Activated naive CD4-positive, alpha-beta T cell treated with anti-CD3 and anti-CD28 coated beads for 36 hours (primary cell): ENCODE measurements at regions of chr17 and their contacts with region 1.

Region 1: GRCh38 chr17:55458977-55459376 is 37.3 kb upstream of the MMD start:
- DNase-seq: peak; percentile 80
- H3K4me3 Mint-ChIP-seq: no peak overlapping the region
- H3K27ac Mint-ChIP-seq: no peak overlapping the region
- H3K4me1 Mint-ChIP-seq: peaks cover 19% of the 10 kb centered on the region
- H3K27me3 Mint-ChIP-seq: no peaks in the 10 kb centered on the region

Region 2: GRCh38 chr17:55437159-55437605 is 21.8 kb before region 1 on chr17:
- CTCF ChIA-PET with region 1: interaction called, 3 read pairs
- intact Hi-C with region 1: loop called (anchors 1 kb)
- DNase-seq: no peak
- H3K4me3 Mint-ChIP-seq: no peak overlapping the region
- H3K27ac Mint-ChIP-seq: no peak overlapping the region
- H3K4me1 Mint-ChIP-seq: peaks cover 31% of the 10 kb centered on the region
- H3K27me3 Mint-ChIP-seq: peaks cover 4% of the 10 kb centered on the region

Region 3: DNA sequence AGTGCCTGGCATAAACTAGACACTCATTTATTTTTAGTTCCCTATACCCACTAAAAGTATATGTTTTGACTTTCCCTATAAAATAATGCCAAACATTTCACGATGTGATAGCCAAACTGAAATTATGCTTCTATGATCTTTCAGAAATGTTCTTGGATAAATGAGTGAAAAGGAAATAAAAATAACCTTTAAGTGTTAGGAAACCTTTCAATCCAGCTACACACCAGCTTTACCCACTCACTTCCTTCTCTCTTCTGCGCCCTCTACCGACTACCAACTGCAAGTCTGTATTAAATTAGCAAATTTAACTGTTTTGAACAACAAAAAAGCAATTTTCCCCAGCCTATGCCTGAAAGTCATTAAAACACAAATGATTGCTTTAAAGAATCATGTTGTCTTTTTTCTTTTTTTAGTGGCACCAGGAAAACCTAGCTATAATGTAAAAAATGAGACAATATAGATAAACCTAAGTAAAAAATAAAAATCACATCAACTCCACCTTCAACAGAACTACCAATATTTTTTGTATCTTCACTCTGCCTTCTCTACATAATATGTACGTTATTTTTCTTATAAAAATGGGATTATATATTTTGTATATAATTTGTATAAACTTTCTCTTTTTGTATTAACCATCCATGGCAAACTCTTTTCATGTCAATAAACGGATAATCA is 276.9 kb after region 1 on chr17:
- CTCF ChIA-PET with region 1: no interaction called
- intact Hi-C with region 1: loop called (anchors 1 kb)
- DNase-seq: peak; percentile 64
- H3K4me3 Mint-ChIP-seq: no peak overlapping the region
- H3K27ac Mint-ChIP-seq: no peak overlapping the region
- H3K4me1 Mint-ChIP-seq: peaks cover 30% of the 10 kb centered on the region
- H3K27me3 Mint-ChIP-seq: peaks cover 27% of the 10 kb centered on the region